ENCODE measurements at regions of chr6 and their contacts with region 1.

Region 1: DNA sequence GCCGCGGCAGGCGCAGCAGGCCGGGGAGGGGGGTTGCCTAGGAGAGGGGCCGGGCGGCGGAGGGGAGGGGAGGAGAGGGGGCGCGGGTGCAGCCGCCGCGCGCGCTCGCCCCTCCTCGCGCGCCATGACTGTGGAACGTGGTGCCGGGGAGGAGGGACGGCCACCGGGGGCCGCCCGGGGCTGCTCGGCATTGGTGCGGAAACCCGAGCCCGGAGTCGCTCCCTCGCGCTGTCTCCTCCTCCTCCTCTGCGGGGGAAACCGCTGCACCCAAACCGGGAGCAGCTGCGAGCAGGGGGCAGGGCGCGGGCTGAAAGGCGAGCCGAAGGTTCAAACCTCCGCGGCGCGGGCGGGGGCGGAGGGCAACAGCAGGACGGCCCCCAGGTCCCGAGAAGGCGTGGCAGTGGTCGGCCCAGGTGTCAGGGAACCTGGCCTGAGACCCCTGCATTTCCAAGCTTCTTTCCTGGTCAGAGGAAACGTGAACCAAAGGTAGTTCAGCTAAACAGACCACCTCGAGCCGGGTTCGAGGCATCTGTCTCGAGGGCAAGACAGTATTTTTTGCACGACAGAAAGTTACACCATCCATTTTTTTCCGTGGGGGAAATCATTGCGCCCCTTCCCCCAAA is 1.4 kb upstream of the TRERF1 start:
- DNase-seq: peak; percentile 94
- H3K4me3 Mint-ChIP-seq: peak overlapping the region; percentile 99
- H3K27ac Mint-ChIP-seq: peak overlapping the region; percentile 93
- H3K4me1 Mint-ChIP-seq: peaks cover 35% of the 10 kb centered on the region
- H3K27me3 Mint-ChIP-seq: peaks cover 11% of the 10 kb centered on the region

Region 2: GRCh38 chr6:42230345-42231321 is 222.5 kb before region 1 on chr6:
- intact Hi-C with region 1: no loop called
- DNase-seq: no peak
- H3K4me3 Mint-ChIP-seq: no peak overlapping the region
- H3K27ac Mint-ChIP-seq: no peak overlapping the region
- H3K4me1 Mint-ChIP-seq: no peaks in the 10 kb centered on the region
- H3K27me3 Mint-ChIP-seq: no peaks in the 10 kb centered on the region

Region 3: DNA sequence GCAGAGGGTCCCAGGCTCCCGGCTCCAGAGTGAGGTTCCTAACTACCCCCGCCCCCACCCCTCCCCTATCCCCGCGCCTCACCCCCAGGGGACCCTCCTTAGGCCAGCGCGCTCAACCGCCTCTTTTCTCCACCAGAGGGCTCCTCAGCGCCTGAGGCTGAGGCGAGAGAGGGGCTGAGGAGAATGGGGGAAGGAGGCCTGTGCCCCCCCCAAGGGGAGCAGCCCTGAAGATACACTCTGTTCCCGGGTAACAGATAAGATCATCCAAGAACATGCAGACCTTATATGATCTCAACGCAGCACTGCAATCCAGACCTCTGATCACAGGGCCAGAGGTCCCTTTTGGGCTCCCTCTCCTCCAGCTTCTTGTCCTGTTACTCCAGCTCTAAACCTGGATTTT is 192.2 kb before region 1 on chr6:
- intact Hi-C with region 1: loop called (anchors 2 kb)
- DNase-seq: peak; percentile 79
- H3K4me3 Mint-ChIP-seq: no peak overlapping the region
- H3K27ac Mint-ChIP-seq: peak overlapping the region; percentile 73
- H3K4me1 Mint-ChIP-seq: peaks cover 8% of the 10 kb centered on the region
- H3K27me3 Mint-ChIP-seq: no peaks in the 10 kb centered on the region

Region 4: GRCh38 chr6:42339991-42340401 is 113.1 kb before region 1 on chr6:
- intact Hi-C with region 1: loop called (anchors 1 kb)
- DNase-seq: peak; percentile 78
- H3K4me3 Mint-ChIP-seq: peak overlapping the region; percentile 65
- H3K27ac Mint-ChIP-seq: peak overlapping the region; percentile 94
- H3K4me1 Mint-ChIP-seq: peaks cover 75% of the 10 kb centered on the region
- H3K27me3 Mint-ChIP-seq: no peaks in the 10 kb centered on the region

Region 5: DNA sequence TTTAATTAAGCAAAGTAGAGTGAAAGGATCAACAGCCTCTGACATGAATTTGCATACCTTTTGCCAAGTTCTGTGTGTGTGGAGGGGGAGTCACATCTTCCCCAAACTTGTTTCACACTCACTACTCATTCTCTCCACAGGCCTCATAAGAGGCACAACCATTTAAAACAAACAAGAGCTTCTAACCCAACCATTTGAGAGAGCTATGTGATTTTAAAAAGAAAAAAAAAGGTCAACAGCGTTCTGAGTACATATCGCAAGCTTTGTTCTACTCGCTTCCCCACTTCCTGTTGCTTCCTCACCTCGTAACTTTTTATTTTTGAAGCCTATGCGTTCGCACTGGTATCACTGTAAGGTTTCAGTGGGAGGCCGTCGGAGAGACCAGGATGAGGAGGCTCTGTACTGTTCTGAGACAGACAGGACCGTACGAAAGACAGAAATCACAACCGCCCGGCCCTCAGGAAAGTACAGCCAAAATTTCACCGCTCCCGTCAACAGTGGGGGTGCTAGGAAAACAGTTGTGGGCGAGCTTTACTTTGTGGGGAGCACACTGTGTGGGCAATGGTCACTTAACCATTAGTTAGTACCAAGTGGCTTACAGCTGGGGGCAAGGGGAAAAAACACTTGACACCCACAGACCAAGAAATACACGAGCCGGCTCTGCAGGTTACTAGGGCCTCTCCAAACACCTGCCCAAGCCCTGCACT is 62.8 kb before region 1 on chr6:
- intact Hi-C with region 1: loop called (anchors 1 kb)
- DNase-seq: peak; percentile 87
- H3K4me3 Mint-ChIP-seq: peak overlapping the region; percentile 84
- H3K27ac Mint-ChIP-seq: peak overlapping the region; percentile 100
- H3K4me1 Mint-ChIP-seq: peaks cover 79% of the 10 kb centered on the region
- H3K27me3 Mint-ChIP-seq: no peaks in the 10 kb centered on the region

Region 6: DNA sequence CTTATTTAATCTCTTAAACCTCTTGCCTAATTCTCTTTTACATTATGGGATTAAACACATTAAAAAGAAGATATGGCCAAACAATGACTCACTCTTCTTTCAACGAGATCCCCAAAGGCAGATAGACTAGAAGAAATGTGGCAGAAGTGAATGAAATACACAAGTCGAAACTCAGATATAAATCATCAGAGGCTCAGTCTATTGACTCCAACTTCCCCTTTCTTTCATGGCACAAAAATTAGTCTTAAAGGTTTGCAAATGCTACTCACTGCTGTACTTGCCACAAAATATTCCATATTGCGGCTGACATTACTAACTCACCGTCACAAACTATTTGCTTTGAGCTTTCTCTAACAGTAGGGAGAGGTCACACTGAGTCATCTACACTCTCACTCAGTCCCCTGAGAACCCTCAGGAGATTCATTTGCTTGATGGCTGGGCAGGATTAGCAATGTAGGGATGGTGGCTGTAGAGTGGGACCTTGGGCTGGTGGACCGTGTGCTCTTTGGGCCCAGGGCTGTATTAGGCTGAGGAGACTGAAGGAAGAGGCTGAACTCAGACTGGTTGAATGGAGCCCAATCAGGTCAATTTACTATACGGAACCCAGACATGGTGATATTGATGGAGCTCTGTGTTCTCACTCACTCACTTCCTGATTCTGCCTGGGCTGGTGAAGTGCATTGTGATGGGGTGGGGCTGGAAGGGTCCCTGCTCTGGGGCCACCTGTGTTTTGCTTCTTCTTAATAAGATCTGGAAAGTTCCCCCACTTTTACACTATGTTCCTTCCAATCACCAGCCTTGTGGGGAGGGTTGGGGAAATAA is 67.9 kb after region 1 on chr6:
- intact Hi-C with region 1: loop called (anchors 5 kb)
- DNase-seq: peak; percentile 55
- H3K4me3 Mint-ChIP-seq: no peak overlapping the region
- H3K27ac Mint-ChIP-seq: peak overlapping the region; percentile 89
- H3K4me1 Mint-ChIP-seq: peaks cover 10% of the 10 kb centered on the region
- H3K27me3 Mint-ChIP-seq: peaks cover 4% of the 10 kb centered on the region

Region 7: DNA sequence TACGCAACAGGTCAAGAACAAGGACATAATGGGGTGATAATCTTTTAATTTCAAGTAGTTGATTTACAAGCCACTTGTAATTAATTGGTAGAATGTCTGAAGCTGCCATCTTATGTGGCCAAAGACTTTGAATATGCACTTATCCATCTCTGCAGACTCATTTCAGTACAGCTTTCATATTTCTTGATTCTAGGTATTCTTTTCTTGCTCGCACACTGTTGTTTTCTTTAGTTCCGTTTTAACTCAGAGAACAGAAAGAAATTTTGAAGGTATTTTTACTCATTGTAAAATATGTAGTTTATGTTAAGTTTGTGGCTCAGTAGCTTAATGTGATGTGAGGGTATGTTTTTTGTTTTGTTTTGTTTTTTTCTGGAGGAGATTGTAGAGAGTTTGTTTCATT is 184.5 kb after region 1 on chr6:
- intact Hi-C with region 1: no loop called
- DNase-seq: no peak
- H3K4me3 Mint-ChIP-seq: no peak overlapping the region
- H3K27ac Mint-ChIP-seq: peak overlapping the region; percentile 7
- H3K4me1 Mint-ChIP-seq: peaks cover 12% of the 10 kb centered on the region
- H3K27me3 Mint-ChIP-seq: no peaks in the 10 kb centered on the region

Region 8: DNA sequence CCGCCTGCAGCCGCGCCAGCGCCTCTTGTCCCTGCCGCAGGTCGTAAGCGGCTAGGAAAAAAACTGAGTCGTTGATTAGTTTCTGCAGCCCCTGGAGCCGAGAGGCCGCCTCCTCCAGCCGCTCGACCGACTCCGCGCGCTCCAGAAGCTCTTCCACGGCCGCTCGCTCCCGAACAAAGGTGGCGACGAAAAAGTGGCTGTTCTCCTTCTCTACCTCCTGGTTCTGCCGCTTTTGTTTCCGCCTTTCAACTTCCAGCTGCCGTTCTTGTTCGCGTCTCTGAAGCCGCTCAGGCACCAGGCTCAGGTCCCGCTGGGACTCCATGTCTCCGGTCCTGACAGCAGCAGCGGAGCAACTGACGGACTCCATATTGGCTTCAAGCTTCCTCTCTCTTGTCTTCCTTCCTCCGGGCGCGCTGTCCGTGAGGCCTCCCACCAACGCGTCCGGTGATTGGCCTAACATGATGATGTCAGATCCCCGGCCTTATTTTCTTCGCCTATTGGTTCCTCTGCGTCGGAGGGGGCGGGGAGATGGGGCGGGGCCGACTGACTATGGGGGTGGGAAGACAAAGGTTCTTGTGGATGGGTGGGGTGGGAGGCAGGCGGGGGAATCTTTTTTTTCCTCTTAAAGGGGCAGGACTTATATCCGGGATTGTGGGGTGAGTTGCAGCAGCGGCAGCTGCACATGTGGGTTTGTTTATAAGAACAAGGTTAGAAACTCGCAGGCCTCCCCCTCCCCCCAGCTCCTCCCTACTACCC is 292.7 kb after region 1 on chr6 and contains the start of gene TBCC:
- intact Hi-C with region 1: loop called (anchors 10 kb)
- DNase-seq: peak; percentile 97
- H3K4me3 Mint-ChIP-seq: peak within 1 kb of the TSS; percentile 92
- H3K27ac Mint-ChIP-seq: peak within 1 kb of the TSS; percentile 100
- H3K4me1 Mint-ChIP-seq: peaks cover 22% of the 10 kb centered on the region
- H3K27me3 Mint-ChIP-seq: no peaks in the 10 kb centered on the region
- total RNA-seq, gene TBCC: 18.4 TPM in 2 replicates

Measured in activated CD4-positive, alpha-beta T cell treated with anti-CD3 and anti-CD28 coated beads, Interleukin-2, amount 10 ng/mL, durations not matched to agents 24 days and 14 days (primary cell).